Activated CD4-positive, alpha-beta memory T cell treated with anti-CD3 and anti-CD28 coated beads, Interleukin-2, amount 10 ng/mL, durations not matched to agents 7 days and 5 days (primary cell): ENCODE measurements at regions of chr1 and their contacts with region 1.

Region 1: GRCh38 chr1:2255420-2256369 is 27.6 kb downstream of the SKI start:
- DNase-seq: peak; percentile 83
- H3K4me3 Mint-ChIP-seq: no peak overlapping the region
- H3K27ac Mint-ChIP-seq: no peak overlapping the region
- H3K4me1 Mint-ChIP-seq: peaks cover 42% of the 10 kb centered on the region
- H3K27me3 Mint-ChIP-seq: no peaks in the 10 kb centered on the region

Region 2: DNA sequence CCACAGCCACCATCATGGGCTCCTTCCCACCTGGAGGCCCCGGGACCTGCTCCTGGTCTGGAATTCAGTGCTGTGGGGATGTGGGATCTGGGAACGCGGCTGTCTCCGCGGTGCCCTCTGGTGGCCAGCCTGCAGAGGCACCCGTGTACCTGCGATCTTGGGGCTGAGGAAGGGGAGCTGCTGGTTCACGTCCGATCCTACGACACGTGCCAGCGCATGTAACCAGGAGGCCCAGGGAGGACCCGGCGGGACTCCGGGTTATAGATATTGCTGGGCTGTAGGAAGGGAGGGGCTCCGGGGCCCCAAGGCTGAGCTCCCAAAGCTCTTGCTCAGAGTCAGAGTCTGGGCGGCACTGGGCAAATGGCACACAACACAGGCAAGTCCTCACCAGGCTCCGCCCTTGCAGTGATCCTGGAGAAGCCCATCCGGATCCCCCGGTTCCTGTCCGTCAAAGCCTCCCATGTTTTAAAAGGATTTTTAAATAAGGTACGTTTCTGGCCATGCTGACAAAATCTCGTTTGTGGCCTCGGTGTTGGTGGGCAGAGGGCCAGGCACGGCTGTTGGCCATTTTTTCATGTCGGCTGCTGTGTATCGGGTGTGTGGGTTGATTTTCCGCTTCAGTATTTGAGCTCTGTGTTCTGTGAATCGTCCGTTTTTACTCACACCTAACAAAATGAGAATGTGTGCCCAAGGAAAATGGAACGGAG is 81.2 kb before region 1 on chr1:
- CTCF ChIA-PET with region 1: no interaction called
- POLR2A ChIA-PET with region 1: no interaction called
- DNase-seq: peak; percentile 45
- H3K4me3 Mint-ChIP-seq: peak overlapping the region; percentile 24
- H3K27ac Mint-ChIP-seq: no peak overlapping the region
- H3K4me1 Mint-ChIP-seq: peaks cover 2% of the 10 kb centered on the region
- H3K27me3 Mint-ChIP-seq: no peaks in the 10 kb centered on the region

Region 3: DNA sequence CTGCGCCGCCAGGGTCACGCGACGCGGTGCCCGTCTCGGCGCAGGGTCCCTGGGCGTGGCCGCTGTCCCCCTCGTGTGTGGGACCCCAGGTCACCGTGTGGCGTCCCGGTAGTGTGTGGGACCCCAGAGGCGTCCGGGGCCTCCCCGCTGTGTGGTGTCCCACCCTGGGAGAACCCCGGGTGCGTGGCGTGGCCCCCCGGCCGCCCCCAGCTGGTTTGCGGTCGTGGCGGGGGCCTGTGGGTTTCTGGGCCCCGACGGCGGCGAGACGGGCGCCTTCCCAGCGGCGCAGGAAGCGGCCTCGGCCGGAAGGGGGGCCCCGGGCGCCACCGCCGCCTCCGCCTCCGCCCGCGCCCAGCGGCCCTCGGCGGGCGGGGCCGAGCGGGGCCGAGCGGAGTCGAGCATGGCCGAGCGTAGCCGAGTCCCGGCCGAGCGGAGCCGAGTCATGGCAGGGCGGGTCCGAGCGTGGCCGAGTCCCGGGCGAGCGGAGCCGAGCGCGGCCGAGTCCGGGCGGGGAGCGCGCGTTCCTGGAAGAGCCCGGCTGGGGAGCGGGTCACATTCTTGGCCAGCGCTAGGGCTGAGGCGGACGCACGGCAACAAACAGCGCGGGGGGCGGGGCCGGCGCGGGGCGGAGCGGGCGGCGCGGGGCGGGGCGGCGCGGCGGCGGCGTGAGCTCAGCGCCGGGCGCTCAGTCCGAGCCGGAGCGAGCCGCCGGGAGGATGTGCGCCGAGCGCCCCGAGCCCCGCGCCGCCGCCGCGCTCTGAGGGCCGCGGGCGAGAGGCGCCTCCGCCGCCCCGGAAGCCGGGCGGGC is 28.1 kb before region 1 on chr1:
- CTCF ChIA-PET with region 1: interaction called, 3 read pairs
- POLR2A ChIA-PET with region 1: interaction called, 30 read pairs
- DNase-seq: peak; percentile 97
- H3K4me3 Mint-ChIP-seq: peak overlapping the region; percentile 71
- H3K27ac Mint-ChIP-seq: peak overlapping the region; percentile 63
- H3K4me1 Mint-ChIP-seq: peaks cover 17% of the 10 kb centered on the region
- H3K27me3 Mint-ChIP-seq: peaks cover 3% of the 10 kb centered on the region

Region 4: DNA sequence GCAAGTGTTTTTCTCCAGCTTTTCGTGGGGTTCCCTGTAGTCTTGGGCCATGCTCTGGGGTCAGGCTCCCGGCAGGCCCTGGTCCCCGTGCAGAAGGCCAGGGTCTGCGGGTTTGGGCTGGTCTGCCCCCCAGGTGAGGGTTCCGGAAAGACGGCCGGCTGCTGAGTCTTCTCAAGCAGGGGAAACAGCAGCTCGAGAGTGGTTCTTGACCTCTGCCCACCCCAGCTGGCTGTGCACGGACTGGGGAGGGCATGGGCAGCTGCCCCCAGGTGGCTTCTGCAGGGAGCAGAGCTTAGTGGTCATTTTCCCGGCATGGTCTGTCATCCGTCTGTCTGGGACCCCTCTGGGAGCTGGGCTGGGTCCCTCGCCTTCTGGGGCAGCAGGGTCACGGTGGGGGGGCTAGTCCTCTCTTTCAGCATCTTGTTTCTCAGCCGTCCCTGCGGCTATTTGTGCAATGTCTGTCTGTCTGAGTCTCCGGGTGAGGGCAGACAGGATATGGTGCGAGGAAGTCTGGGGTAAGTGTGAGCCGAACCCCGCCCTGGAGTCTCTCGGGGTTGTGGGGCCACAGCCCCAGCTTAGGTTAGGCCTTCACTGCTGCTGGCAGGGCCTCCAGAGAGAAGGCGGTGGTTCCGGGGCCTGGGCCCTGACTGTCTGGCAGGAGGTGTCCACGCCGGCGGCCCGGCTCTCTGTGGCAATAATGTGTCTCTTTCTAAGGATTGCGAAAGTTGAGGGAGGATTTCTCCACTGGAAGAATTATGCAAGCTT is 21.5 kb before region 1 on chr1:
- CTCF ChIA-PET with region 1: interaction called, 7 read pairs
- POLR2A ChIA-PET with region 1: interaction called, 48 read pairs
- DNase-seq: peak; percentile 86
- H3K4me3 Mint-ChIP-seq: peak overlapping the region; percentile 98
- H3K27ac Mint-ChIP-seq: peak overlapping the region; percentile 90
- H3K4me1 Mint-ChIP-seq: peaks cover 67% of the 10 kb centered on the region
- H3K27me3 Mint-ChIP-seq: no peaks in the 10 kb centered on the region

Region 5: GRCh38 chr1:2290595-2291510 is 35.2 kb after region 1 on chr1:
- CTCF ChIA-PET with region 1: interaction called, 5 read pairs
- POLR2A ChIA-PET with region 1: interaction called, 13 read pairs
- DNase-seq: peak; percentile 92
- H3K4me3 Mint-ChIP-seq: peak overlapping the region; percentile 74
- H3K27ac Mint-ChIP-seq: peak overlapping the region; percentile 97
- H3K4me1 Mint-ChIP-seq: peaks cover 85% of the 10 kb centered on the region
- H3K27me3 Mint-ChIP-seq: no peaks in the 10 kb centered on the region

Region 6: GRCh38 chr1:2300851-2301606 is 45.3 kb after region 1 on chr1:
- CTCF ChIA-PET with region 1: interaction called, 3 read pairs
- POLR2A ChIA-PET with region 1: interaction called, 36 read pairs
- DNase-seq: peak; percentile 95
- H3K4me3 Mint-ChIP-seq: peak overlapping the region; percentile 71
- H3K27ac Mint-ChIP-seq: peak overlapping the region; percentile 97
- H3K4me1 Mint-ChIP-seq: peaks cover 68% of the 10 kb centered on the region
- H3K27me3 Mint-ChIP-seq: no peaks in the 10 kb centered on the region

Region 7: DNA sequence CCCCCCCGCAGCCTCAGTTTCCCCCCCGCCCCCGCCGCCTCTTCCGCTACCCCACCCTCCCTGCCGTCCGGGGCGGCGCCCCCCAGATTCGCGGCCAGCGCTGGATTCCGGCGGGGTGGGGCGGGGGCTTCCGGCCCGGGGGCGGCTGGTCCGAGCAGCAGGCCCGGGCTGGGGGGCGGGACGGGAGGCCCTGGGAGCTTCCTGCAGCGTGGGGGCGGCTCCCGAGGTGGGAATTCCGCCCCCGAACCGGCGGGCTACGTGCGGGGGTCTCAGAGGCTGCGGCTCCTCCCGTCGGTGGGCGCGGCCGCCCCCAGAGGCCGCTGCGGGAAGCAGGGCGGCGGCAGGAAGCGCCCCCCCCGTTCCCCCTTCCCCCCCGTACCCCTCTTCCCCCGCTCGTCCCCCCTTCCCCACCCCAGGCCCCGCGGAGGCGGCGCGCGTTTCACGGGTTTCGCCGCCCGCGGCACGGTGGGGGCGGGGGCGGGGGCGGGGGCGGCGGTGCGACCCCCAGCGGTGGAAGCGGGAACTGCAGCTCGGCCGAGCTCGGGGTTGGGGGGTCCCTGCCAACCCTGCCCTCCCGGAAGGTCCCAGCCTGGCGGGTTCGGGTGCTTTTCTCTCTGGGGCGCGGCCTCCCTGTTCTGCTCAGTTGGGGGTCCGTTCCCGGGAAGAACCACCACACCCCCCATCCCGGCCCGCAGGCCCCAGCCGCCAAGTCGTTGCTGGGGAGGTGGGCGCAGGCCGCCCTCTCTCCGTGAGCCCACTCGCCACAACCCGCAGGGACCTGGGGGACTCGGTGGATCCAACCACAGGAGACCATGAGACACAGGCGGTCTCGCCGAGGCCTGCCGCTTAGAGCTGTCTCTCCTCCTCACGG is 59.3 kb after region 1 on chr1:
- CTCF ChIA-PET with region 1: interaction called, 6 read pairs
- POLR2A ChIA-PET with region 1: interaction called, 11 read pairs
- DNase-seq: peak; percentile 61
- H3K4me3 Mint-ChIP-seq: peak overlapping the region; percentile 27
- H3K27ac Mint-ChIP-seq: no peak overlapping the region
- H3K4me1 Mint-ChIP-seq: peaks cover 15% of the 10 kb centered on the region
- H3K27me3 Mint-ChIP-seq: no peaks in the 10 kb centered on the region